Ovary (tissue), 10 donors: ENCODE measurements at regions of chr14 and their contacts with region 1.

Region 1: GRCh38 chr14:101774006-101774795 is 12.7 kb downstream of the PPP2R5C start:
- DNase-seq: no peak
- H3K4me3 ChIP-seq: no peak overlapping the region
- H3K27ac ChIP-seq: no peak overlapping the region
- H3K4me1 ChIP-seq: no peaks in the 10 kb centered on the region
- H3K27me3 ChIP-seq: no peaks in the 10 kb centered on the region
- CTCF ChIP-seq: no peak
- EP300 ChIP-seq: no peak
- POLR2A ChIP-seq: no peak

Region 2: GRCh38 chr14:101525640-101526527 is 248.3 kb before region 1 on chr14:
- intact Hi-C with region 1: no loop called
- DNase-seq: no peak
- H3K4me3 ChIP-seq: no peak overlapping the region
- H3K27ac ChIP-seq: no peak overlapping the region
- H3K4me1 ChIP-seq: peaks cover 2% of the 10 kb centered on the region
- H3K27me3 ChIP-seq: no peaks in the 10 kb centered on the region
- CTCF ChIP-seq: no peak
- EP300 ChIP-seq: no peak
- POLR2A ChIP-seq: no peak

Region 3: DNA sequence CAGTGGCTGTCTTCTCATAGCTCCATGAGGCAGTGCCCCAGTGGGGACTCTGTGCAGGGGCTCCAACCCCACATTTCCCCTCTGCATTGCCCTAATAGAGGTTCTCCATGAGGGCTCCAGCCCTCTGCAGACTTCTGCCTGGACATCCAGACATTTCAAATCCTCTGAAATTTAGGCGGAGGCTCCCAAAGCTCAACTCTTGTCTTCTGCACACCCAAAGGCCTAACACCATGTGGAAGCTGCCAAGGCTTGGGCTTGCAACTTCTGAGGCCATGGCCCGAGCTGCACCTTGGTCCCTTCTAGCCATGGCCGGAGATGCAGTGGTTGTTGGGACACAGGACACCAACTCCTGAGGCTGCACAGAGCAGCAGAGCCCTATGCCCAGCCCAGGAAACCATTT is 33.2 kb before region 1 on chr14:
- intact Hi-C with region 1: no loop called
- DNase-seq: no peak
- H3K4me3 ChIP-seq: no peak overlapping the region
- H3K27ac ChIP-seq: no peak overlapping the region
- H3K4me1 ChIP-seq: no peaks in the 10 kb centered on the region
- H3K27me3 ChIP-seq: no peaks in the 10 kb centered on the region
- CTCF ChIP-seq: no peak
- EP300 ChIP-seq: no peak
- POLR2A ChIP-seq: no peak

Region 4: DNA sequence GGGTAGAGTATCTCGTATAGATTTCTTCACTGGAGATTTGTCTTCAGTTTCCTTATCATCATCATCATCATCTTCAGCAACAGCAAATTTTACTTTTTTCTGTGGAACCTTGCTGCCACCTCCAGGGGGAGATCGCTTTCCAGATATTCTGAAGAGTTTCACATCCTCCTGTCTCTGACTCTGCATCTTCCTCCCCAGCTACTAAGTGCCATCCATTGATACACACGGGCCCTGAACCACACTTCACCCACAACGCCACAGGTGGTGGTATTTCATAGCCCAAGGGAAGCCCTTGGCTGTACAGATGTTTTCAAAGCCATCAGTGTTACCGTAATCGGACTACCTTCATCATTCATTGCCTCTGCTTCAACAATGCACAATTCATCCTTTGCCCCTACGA is 69.5 kb after region 1 on chr14:
- intact Hi-C with region 1: loop called in 2 of 4 experiments (anchors 10 kb)
- DNase-seq: no peak
- H3K4me3 ChIP-seq: no peak overlapping the region
- H3K27ac ChIP-seq: no peak overlapping the region
- H3K4me1 ChIP-seq: peaks cover 1% of the 10 kb centered on the region
- H3K27me3 ChIP-seq: no peaks in the 10 kb centered on the region
- CTCF ChIP-seq: no peak
- EP300 ChIP-seq: no peak
- POLR2A ChIP-seq: no peak

Region 5: GRCh38 chr14:101889898-101890297 is 115.7 kb after region 1 on chr14:
- intact Hi-C with region 1: loop called in 2 of 4 experiments (anchors 5 to 10 kb)
- DNase-seq: peak in 1 of 5 donors; percentile 25
- H3K4me3 ChIP-seq: no peak overlapping the region
- H3K27ac ChIP-seq: no peak overlapping the region
- H3K4me1 ChIP-seq: no peaks in the 10 kb centered on the region
- H3K27me3 ChIP-seq: no peaks in the 10 kb centered on the region
- CTCF ChIP-seq: no peak
- EP300 ChIP-seq: no peak
- POLR2A ChIP-seq: no peak

Region 6: GRCh38 chr14:102086972-102087761 is 313.0 kb after region 1 on chr14 and contains the start of gene HSP90AA1:
- intact Hi-C with region 1: loop called in 1 of 4 experiments (anchors 5 kb)
- DNase-seq: peak; percentile 89 to 97 (median 96)
- H3K4me3 ChIP-seq: peak within 1 kb of the TSS; percentile 96
- H3K27ac ChIP-seq: peak within 1 kb of the TSS; percentile 100
- H3K4me1 ChIP-seq: peaks cover 13% of the 10 kb centered on the region
- H3K27me3 ChIP-seq: no peaks in the 10 kb centered on the region
- CTCF ChIP-seq: peak in 2 of 3 donors; percentile 14 to 24
- EP300 ChIP-seq: no peak
- POLR2A ChIP-seq: peak; percentile 90
- total RNA-seq, gene HSP90AA1: 250 to 502 (median 299) TPM